ENCODE measurements at regions of chr14 and their contacts with region 1.

Region 1: DNA sequence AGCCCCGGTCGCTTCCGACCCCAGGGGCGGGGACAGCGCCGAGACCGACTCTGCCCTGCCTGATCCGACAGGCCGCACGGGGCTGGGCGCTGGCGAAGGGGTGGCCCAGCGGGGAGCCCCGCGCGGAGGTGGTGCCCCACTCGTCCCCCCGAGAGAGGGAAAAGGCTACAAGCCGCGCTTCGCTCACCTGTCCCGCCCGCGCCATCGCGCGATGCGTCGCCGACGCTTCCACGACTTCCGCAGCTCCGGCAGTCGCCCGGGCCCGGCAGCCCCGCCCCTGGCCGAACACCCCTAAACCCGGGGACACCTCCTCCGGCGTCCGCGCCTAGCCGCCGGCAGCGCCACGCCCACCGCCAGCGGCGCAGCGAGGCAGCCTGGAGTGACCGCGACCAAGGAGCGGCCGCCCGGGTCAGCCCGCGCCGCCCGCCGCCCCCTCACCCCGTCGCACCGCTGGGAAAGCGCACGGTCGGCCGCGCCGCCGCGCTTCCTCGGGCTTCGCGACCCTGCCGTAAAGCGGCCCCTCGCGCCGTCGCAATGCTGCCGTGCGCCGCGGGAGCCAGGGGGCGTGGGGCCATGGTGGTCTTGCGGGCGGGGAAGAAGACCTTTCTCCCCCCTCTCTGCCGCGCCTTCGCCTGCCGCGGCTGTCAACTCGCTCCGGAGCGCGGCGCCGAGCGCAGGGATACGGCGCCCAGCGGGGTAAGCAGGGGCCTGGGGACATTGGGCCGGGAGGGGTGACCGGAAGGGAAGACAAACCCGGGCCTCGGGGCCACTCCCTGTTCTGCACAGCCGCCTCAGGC is at the starts of genes BAG5 and COA8:
- DNase-seq: peak; percentile 92
- H3K4me3 Mint-ChIP-seq: peak within 1 kb of the TSS; percentile 94
- H3K27ac Mint-ChIP-seq: peak within 1 kb of the TSS; percentile 90
- H3K4me1 Mint-ChIP-seq: peaks cover 61% of the 10 kb centered on the region
- H3K27me3 Mint-ChIP-seq: no peaks in the 10 kb centered on the region
- total RNA-seq, gene BAG5: 23.2 to 23.8 TPM
- total RNA-seq, gene COA8: 46.2 to 48.9 TPM

Region 2: GRCh38 chr14:103520657-103521437 is 41.8 kb before region 1 on chr14:
- CTCF ChIA-PET with region 1: interaction called, 16 read pairs
- POLR2A ChIA-PET with region 1: no interaction called
- intact Hi-C with region 1: no loop called
- DNase-seq: peak; percentile 70
- H3K4me3 Mint-ChIP-seq: peak overlapping the region; percentile 32
- H3K27ac Mint-ChIP-seq: no peak overlapping the region
- H3K4me1 Mint-ChIP-seq: peaks cover 9% of the 10 kb centered on the region
- H3K27me3 Mint-ChIP-seq: peaks cover 5% of the 10 kb centered on the region

Region 3: DNA sequence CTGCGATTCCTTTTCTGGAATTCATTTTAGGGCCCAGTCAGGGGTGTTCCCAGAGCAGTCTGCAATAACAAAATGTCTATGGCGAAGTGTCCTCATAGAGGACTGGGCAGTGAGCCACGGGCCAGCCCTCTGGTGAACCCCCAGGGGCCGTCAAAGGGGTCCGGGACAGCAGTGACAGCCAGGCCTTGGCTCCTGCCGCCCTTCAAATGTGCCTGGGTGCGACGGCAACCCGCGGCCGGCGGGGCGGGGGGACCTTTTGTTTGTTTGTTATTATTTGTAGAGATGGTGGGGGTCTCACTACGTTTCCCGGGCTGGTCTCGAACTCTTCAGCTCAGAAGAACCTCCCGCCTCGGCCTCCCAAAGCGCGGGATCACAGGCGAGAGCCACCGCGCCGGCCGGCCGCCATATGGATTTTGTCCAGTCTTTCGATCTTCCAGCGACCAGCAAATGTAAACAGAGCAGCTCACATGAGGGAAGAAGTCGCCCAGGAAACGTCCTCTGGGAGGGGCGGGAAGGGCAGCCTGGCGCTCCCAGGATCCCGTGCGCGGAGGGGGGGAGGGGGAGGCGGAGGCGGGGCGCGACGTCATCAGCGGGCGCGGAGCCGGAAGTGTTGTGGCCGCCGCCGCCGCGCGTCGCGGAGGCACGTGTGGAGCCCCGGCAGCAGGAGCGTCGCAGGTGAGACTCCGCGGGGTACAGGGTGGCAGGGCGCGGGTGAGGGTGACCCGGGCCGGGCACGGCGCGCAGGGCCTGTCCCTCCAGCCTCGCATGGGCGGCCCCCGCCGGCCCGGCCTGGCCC is 33.8 kb before region 1 on chr14 and contains the start of gene TRMT61A:
- CTCF ChIA-PET with region 1: no interaction called
- POLR2A ChIA-PET with region 1: interaction called, 4 read pairs
- intact Hi-C with region 1: loop called (anchors 2 kb)
- DNase-seq: peak; percentile 88
- H3K4me3 Mint-ChIP-seq: peak within 1 kb of the TSS; percentile 94
- H3K27ac Mint-ChIP-seq: peak within 1 kb of the TSS; percentile 85
- H3K4me1 Mint-ChIP-seq: peaks cover 37% of the 10 kb centered on the region
- H3K27me3 Mint-ChIP-seq: peaks cover under 1% of the 10 kb centered on the region
- total RNA-seq, gene TRMT61A: 7.4 to 7.6 TPM

Region 4: DNA sequence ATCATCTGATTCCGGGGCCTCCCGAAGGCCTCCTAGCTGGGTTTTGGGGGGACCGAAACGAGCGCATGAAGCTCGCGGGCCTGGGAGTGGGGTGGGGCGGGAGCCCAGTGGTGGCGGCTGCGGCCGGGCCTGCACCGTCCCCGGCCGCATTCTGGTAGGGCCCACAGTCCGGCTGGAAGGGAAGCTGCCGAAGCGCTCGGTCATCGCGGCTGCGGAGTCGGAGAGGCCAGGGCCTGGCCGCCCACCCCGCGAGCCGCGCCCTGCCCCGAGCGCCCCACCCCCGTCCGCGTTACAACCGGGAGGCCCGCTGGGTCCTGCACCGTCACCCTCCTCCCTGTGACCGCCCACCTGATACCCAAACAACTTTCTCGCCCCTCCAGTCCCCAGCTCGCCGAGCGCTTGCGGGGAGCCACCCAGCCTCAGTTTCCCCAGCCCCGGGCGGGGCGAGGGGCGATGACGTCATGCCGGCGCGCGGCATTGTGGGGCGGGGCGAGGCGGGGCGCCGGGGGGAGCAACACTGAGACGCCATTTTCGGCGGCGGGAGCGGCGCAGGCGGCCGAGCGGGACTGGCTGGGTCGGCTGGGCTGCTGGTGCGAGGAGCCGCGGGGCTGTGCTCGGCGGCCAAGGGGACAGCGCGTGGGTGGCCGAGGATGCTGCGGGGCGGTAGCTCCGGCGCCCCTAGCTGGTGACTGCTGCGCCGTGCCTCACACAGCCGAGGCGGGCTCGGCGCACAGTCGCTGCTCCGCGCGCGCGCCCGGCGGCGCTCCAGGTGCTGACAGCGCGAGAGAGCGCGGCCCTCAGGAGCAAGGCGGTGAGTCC is 66.3 kb after region 1 on chr14 and contains the start of gene KLC1:
- CTCF ChIA-PET with region 1: no interaction called
- POLR2A ChIA-PET with region 1: interaction called, 4 read pairs
- intact Hi-C with region 1: loop called (anchors 1 kb)
- DNase-seq: peak; percentile 88
- H3K4me3 Mint-ChIP-seq: peak within 1 kb of the TSS; percentile 84
- H3K27ac Mint-ChIP-seq: peak within 1 kb of the TSS; percentile 83
- H3K4me1 Mint-ChIP-seq: peaks cover 36% of the 10 kb centered on the region
- H3K27me3 Mint-ChIP-seq: no peaks in the 10 kb centered on the region
- total RNA-seq, gene KLC1: 119 to 130 TPM

Region 5: GRCh38 chr14:103715052-103716000 is 152.7 kb after region 1 on chr14 and contains the starts of genes XRCC3 and ZFYVE21:
- CTCF ChIA-PET with region 1: no interaction called
- POLR2A ChIA-PET with region 1: no interaction called
- intact Hi-C with region 1: loop called (anchors 2 kb)
- DNase-seq: peak; percentile 100
- H3K4me3 Mint-ChIP-seq: peak within 1 kb of the TSS; percentile 86
- H3K27ac Mint-ChIP-seq: peak within 1 kb of the TSS; percentile 85
- H3K4me1 Mint-ChIP-seq: peaks cover 60% of the 10 kb centered on the region
- H3K27me3 Mint-ChIP-seq: peaks cover 2% of the 10 kb centered on the region
- total RNA-seq, gene XRCC3: 41.9 to 48.5 TPM
- total RNA-seq, gene ZFYVE21: 14.9 to 15.9 TPM